ENCODE measurements at regions of chr1 and their contacts with region 1.

Region 1: DNA sequence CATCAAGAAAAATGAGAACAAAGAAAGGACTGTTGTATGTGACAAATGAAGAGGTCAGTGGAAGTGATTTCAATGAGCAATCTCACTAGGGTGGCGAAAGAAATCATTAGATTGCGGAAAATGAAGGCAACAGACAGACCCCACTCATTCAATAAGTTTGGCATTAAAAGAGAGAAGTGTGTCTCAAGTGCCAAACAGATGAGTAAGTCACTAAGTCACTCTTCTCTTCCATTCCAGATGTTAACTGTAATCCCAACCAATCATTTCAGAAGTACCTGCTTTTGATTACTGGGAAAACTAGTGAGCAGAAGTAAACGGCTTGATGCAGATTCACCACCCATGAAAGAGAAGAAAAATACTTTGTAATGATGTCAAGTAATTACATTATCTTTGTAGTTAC is 144.3 kb upstream of the PRMT6 start:
- DNase-seq: no peak
- ATAC-seq: no peak
- H3K4me3 ChIP-seq: no peak overlapping the region
- H3K4me3 Mint-ChIP-seq: no peak overlapping the region
- H3K27ac ChIP-seq: no peak overlapping the region
- H3K27ac Mint-ChIP-seq: no peak overlapping the region
- H3K4me1 ChIP-seq: no peaks in the 10 kb centered on the region
- H3K4me1 Mint-ChIP-seq: no peaks in the 10 kb centered on the region
- H3K27me3 ChIP-seq: no peaks in the 10 kb centered on the region
- H3K27me3 Mint-ChIP-seq: no peaks in the 10 kb centered on the region
- CTCF ChIP-seq: no peak

Region 2: GRCh38 chr1:106831511-106831910 is 80.6 kb before region 1 on chr1:
- CTCF ChIA-PET with region 1: no interaction called
- POLR2A ChIA-PET with region 1: no interaction called
- intact Hi-C with region 1: no loop called
- DNase-seq: no peak
- ATAC-seq: no peak
- H3K4me3 ChIP-seq: no peak overlapping the region
- H3K4me3 Mint-ChIP-seq: no peak overlapping the region
- H3K27ac ChIP-seq: no peak overlapping the region
- H3K27ac Mint-ChIP-seq: no peak overlapping the region
- H3K4me1 ChIP-seq: no peaks in the 10 kb centered on the region
- H3K4me1 Mint-ChIP-seq: no peaks in the 10 kb centered on the region
- H3K27me3 ChIP-seq: no peaks in the 10 kb centered on the region
- H3K27me3 Mint-ChIP-seq: no peaks in the 10 kb centered on the region
- CTCF ChIP-seq: no peak

Region 3: DNA sequence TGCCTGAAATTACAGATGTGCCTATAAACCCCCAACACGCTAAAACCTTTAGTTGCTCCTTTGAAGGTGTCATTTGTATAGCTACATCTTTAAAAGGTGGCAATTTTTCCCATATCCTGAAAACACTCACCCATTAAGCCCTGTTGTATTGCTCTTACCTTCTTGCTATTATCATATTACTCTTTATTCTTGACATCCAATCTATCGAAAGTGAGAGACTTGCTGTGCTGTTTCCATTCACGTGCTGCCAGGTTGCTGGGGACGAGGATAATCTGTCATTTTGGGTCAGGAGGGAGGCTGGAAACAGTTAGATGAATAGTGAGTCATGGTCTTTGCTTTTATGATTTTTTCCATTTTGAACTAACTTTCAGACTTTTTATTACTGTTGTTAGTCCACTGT is 68.6 kb before region 1 on chr1:
- CTCF ChIA-PET with region 1: no interaction called
- POLR2A ChIA-PET with region 1: no interaction called
- intact Hi-C with region 1: loop called in 1 of 2 experiments (anchors 2 kb)
- DNase-seq: no peak
- ATAC-seq: no peak
- H3K4me3 ChIP-seq: no peak overlapping the region
- H3K4me3 Mint-ChIP-seq: no peak overlapping the region
- H3K27ac ChIP-seq: no peak overlapping the region
- H3K27ac Mint-ChIP-seq: no peak overlapping the region
- H3K4me1 ChIP-seq: no peaks in the 10 kb centered on the region
- H3K4me1 Mint-ChIP-seq: no peaks in the 10 kb centered on the region
- H3K27me3 ChIP-seq: no peaks in the 10 kb centered on the region
- H3K27me3 Mint-ChIP-seq: no peaks in the 10 kb centered on the region
- CTCF ChIP-seq: no peak

Region 4: GRCh38 chr1:106960412-106960811 is 48.3 kb after region 1 on chr1:
- CTCF ChIA-PET with region 1: no interaction called
- POLR2A ChIA-PET with region 1: no interaction called
- intact Hi-C with region 1: no loop called
- DNase-seq: no peak
- ATAC-seq: no peak
- H3K4me3 ChIP-seq: no peak overlapping the region
- H3K4me3 Mint-ChIP-seq: no peak overlapping the region
- H3K27ac ChIP-seq: no peak overlapping the region
- H3K27ac Mint-ChIP-seq: no peak overlapping the region
- H3K4me1 ChIP-seq: no peaks in the 10 kb centered on the region
- H3K4me1 Mint-ChIP-seq: no peaks in the 10 kb centered on the region
- H3K27me3 ChIP-seq: no peaks in the 10 kb centered on the region
- H3K27me3 Mint-ChIP-seq: peaks cover 10% of the 10 kb centered on the region
- CTCF ChIP-seq: no peak

Region 5: GRCh38 chr1:107047556-107047955 is 135.4 kb after region 1 on chr1:
- CTCF ChIA-PET with region 1: no interaction called
- POLR2A ChIA-PET with region 1: no interaction called
- intact Hi-C with region 1: no loop called
- DNase-seq: no peak
- ATAC-seq: no peak
- H3K4me3 ChIP-seq: no peak overlapping the region
- H3K4me3 Mint-ChIP-seq: no peak overlapping the region
- H3K27ac ChIP-seq: no peak overlapping the region
- H3K27ac Mint-ChIP-seq: no peak overlapping the region
- H3K4me1 ChIP-seq: no peaks in the 10 kb centered on the region
- H3K4me1 Mint-ChIP-seq: no peaks in the 10 kb centered on the region
- H3K27me3 ChIP-seq: no peaks in the 10 kb centered on the region
- H3K27me3 Mint-ChIP-seq: peaks cover 32% of the 10 kb centered on the region
- CTCF ChIP-seq: no peak

Measured in CD4-positive, alpha-beta T cell (primary cell).